GM18951 (cell line): ENCODE measurements at regions of chr12 and their contacts with region 1.

Region 1: GRCh38 chr12:105053116-105053572 is 31.1 kb downstream of the ALDH1L2 start:
- POLR2A ChIP-seq: no peak

Region 2: GRCh38 chr12:104381731-104382480 is 671.2 kb before region 1 on chr12:
- in situ Hi-C with region 1: loop called (anchors 25 kb)
- POLR2A ChIP-seq: no peak

Region 3: GRCh38 chr12:104671407-104672098 is 381.6 kb before region 1 on chr12:
- in situ Hi-C with region 1: loop called (anchors 10 kb)
- POLR2A ChIP-seq: no peak